ENCODE measurements at regions of chr15 and their contacts with region 1.

Region 1: GRCh38 chr15:96230465-96231181 is 99.9 kb upstream of the NR2F2 start:
- DNase-seq: no peak
- H3K4me3 Mint-ChIP-seq: no peak overlapping the region
- H3K27ac Mint-ChIP-seq: peak overlapping the region; percentile 84
- H3K4me1 Mint-ChIP-seq: peaks cover 65% of the 10 kb centered on the region
- H3K27me3 Mint-ChIP-seq: no peaks in the 10 kb centered on the region
- CTCF ChIP-seq: no peak

Region 2: GRCh38 chr15:96184297-96184696 is 46.3 kb before region 1 on chr15:
- CTCF ChIA-PET with region 1: no interaction called
- intact Hi-C with region 1: loop called (anchors 1 kb)
- DNase-seq: peak; percentile 32
- H3K4me3 Mint-ChIP-seq: peak overlapping the region; percentile 28
- H3K27ac Mint-ChIP-seq: peak overlapping the region; percentile 58
- H3K4me1 Mint-ChIP-seq: peaks cover 62% of the 10 kb centered on the region
- H3K27me3 Mint-ChIP-seq: no peaks in the 10 kb centered on the region
- CTCF ChIP-seq: no peak

Region 3: GRCh38 chr15:96252137-96252536 is 21.5 kb after region 1 on chr15:
- CTCF ChIA-PET with region 1: interaction called, 6 read pairs
- intact Hi-C with region 1: loop called (anchors 1 kb)
- DNase-seq: peak; percentile 82
- H3K4me3 Mint-ChIP-seq: peak overlapping the region; percentile 0
- H3K27ac Mint-ChIP-seq: peak overlapping the region; percentile 60
- H3K4me1 Mint-ChIP-seq: peaks cover 33% of the 10 kb centered on the region
- H3K27me3 Mint-ChIP-seq: no peaks in the 10 kb centered on the region
- CTCF ChIP-seq: no peak

Region 4: DNA sequence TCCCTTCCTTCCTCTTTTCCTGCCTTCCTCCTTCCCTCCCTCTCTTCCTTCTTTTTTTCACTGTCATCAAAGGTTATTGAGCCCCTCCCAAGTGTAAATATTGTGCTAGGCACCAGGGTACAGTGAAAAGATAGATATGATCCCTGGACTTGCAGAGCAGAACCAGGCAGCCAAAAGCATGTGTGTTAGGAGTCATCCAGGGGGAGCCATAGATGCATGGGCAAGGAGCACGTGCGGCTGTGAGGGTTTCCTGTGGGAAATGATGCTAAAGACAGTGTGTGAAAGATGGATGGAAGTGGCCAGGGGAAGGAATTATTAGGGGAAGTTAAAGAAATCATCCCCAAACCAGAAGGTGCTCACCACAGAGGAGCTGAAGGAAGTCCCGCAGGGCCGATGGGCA is 165.1 kb after region 1 on chr15:
- CTCF ChIA-PET with region 1: no interaction called
- intact Hi-C with region 1: no loop called
- DNase-seq: no peak
- H3K4me3 Mint-ChIP-seq: no peak overlapping the region
- H3K27ac Mint-ChIP-seq: no peak overlapping the region
- H3K4me1 Mint-ChIP-seq: peaks cover 18% of the 10 kb centered on the region
- H3K27me3 Mint-ChIP-seq: no peaks in the 10 kb centered on the region
- CTCF ChIP-seq: no peak